Caco-2 (cell line): ENCODE measurements at regions of chr5 and their contacts with region 1.

Region 1: DNA sequence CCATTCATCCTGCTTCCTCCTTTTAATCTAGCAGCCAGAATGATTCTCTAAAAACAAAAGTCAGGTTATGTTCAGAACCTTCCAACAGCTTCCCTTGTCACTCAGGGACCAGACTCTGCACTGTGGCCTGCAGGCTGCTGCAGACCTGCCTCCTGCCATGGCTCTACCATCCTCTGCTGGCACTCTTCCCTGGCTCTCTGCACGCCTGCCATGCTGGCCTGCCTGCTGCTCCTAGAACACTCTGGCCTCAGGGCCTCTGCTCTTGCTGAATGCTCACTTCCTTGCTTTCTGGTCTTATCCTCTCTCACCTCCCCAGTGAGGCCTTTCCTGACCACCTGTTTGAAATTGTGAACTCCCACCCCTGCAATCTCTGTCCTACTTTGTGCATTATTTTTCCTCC is 149.4 kb downstream of the CD180 start:
- DNase-seq: no peak
- H3K4me3 ChIP-seq: no peak overlapping the region
- H3K4me3 Mint-ChIP-seq: peak overlapping the region; percentile 59
- H3K27ac Mint-ChIP-seq: peak overlapping the region; percentile 61
- H3K4me1 ChIP-seq: peaks cover 93% of the 10 kb centered on the region
- H3K4me1 Mint-ChIP-seq: peaks cover 71% of the 10 kb centered on the region
- H3K27me3 ChIP-seq: no peaks in the 10 kb centered on the region
- H3K27me3 Mint-ChIP-seq: no peaks in the 10 kb centered on the region
- CTCF ChIP-seq: no peak

Region 2: DNA sequence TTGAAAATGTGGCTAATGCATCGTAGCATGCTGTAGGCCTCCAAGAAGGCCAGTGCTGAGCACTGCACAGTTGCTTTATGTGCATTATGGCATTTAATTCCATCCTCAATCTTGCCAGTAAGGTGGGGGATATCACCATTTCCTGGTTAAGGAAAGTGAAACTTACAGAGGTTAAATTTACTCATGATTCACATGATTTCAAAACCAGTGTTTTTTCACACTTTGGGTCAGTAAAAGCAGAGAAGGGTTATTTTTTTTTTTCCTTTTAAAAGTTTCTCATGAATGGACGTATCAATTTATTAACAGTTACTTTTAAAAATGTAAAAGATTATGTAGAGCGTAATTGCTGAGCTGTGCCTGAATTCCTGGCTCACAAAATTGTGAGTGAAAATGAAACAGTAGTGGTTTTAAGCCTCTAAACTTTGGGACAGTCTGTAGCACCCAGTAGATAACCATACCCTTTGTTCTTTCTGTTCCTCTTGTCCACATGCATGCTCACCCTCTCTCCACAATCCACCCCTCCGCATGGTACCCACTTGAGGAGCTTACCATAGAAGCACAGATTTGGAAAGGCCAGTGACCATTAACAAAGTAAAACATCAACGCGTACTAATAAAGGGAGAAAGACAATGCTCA is 429.8 kb before region 1 on chr5:
- CTCF ChIA-PET with region 1: no interaction called
- POLR2A ChIA-PET with region 1: no interaction called
- intact Hi-C with region 1: no loop called
- DNase-seq: no peak
- H3K4me3 ChIP-seq: no peak overlapping the region
- H3K4me3 Mint-ChIP-seq: no peak overlapping the region
- H3K27ac Mint-ChIP-seq: no peak overlapping the region
- H3K4me1 ChIP-seq: no peaks in the 10 kb centered on the region
- H3K4me1 Mint-ChIP-seq: no peaks in the 10 kb centered on the region
- H3K27me3 ChIP-seq: no peaks in the 10 kb centered on the region
- H3K27me3 Mint-ChIP-seq: peaks cover 11% of the 10 kb centered on the region
- CTCF ChIP-seq: no peak

Region 3: DNA sequence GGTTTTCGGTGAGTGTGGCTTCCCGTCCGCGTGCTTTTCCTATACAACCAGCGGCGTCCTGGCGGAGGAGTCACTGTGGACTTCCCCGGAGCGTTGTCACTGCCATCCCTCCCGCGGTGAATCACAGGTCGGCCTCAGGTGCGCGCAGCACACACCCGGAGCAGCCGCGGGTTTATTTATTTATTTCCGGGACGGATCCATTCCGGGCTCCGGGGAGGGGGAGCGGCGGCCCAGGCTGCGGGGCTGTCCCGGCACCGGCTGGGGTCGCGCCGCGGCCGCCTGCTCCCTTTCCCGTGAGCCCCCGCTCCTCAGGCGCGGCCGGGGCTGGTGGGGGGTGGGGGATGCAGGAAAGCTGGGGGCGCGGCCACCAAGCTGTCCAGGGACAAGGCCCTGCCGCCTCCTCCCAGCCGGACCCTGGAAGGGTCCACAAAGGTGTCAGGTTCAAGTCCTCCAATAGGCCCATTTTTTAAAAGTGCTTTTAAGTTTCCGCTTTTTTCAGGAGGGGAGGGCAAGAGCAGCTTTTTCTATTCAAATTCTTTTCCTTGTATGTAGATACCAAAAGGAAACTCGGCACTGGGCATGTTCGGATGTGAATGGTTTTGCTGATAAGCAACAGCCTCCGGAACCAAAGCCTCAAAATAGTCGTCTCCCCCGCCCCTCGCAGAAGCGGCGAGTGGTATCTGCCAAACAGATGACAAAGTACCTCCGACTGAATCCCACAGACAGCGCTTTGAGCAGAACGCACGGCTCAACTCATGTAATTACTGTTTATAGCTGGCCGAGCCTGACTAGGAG is 43.0 kb before region 1 on chr5:
- CTCF ChIA-PET with region 1: no interaction called
- POLR2A ChIA-PET with region 1: interaction called, 5 read pairs
- intact Hi-C with region 1: loop called (anchors 2 kb)
- DNase-seq: peak; percentile 93 to 96
- H3K4me3 ChIP-seq: peak overlapping the region; percentile 51
- H3K4me3 Mint-ChIP-seq: peak overlapping the region; percentile 97
- H3K27ac Mint-ChIP-seq: peak overlapping the region; percentile 95
- H3K4me1 ChIP-seq: peaks cover 45% of the 10 kb centered on the region
- H3K4me1 Mint-ChIP-seq: peaks cover 41% of the 10 kb centered on the region
- H3K27me3 ChIP-seq: no peaks in the 10 kb centered on the region
- H3K27me3 Mint-ChIP-seq: no peaks in the 10 kb centered on the region
- CTCF ChIP-seq: no peak

Region 4: GRCh38 chr5:67015541-67016191 is 31.5 kb before region 1 on chr5:
- CTCF ChIA-PET with region 1: interaction called, 4 read pairs
- POLR2A ChIA-PET with region 1: interaction called, 5 read pairs
- intact Hi-C with region 1: loop called (anchors 2 kb)
- DNase-seq: peak in 1 of 2 experiments; percentile 56
- H3K4me3 ChIP-seq: peak overlapping the region; percentile 8; the same call in 1 of the 2 replicates
- H3K4me3 Mint-ChIP-seq: peak overlapping the region; percentile 57
- H3K27ac Mint-ChIP-seq: peak overlapping the region; percentile 84
- H3K4me1 ChIP-seq: peaks cover 78% of the 10 kb centered on the region
- H3K4me1 Mint-ChIP-seq: peaks cover 57% of the 10 kb centered on the region
- H3K27me3 ChIP-seq: no peaks in the 10 kb centered on the region
- H3K27me3 Mint-ChIP-seq: no peaks in the 10 kb centered on the region
- CTCF ChIP-seq: no peak

Region 5: GRCh38 chr5:67033880-67034651 is 13.1 kb before region 1 on chr5:
- CTCF ChIA-PET with region 1: no interaction called
- POLR2A ChIA-PET with region 1: interaction called, 3 read pairs
- intact Hi-C with region 1: loop called (anchors 1 kb)
- DNase-seq: peak; percentile 64 to 65
- H3K4me3 ChIP-seq: no peak overlapping the region
- H3K4me3 Mint-ChIP-seq: peak overlapping the region; percentile 27
- H3K27ac Mint-ChIP-seq: peak overlapping the region; percentile 86
- H3K4me1 ChIP-seq: peaks cover 65% of the 10 kb centered on the region
- H3K4me1 Mint-ChIP-seq: peaks cover 43% of the 10 kb centered on the region
- H3K27me3 ChIP-seq: no peaks in the 10 kb centered on the region
- H3K27me3 Mint-ChIP-seq: no peaks in the 10 kb centered on the region
- CTCF ChIP-seq: no peak

Region 6: GRCh38 chr5:67059744-67060490 is 12.8 kb after region 1 on chr5:
- CTCF ChIA-PET with region 1: no interaction called
- POLR2A ChIA-PET with region 1: no interaction called
- intact Hi-C with region 1: loop called (anchors 1 kb)
- DNase-seq: no peak
- H3K4me3 ChIP-seq: no peak overlapping the region
- H3K4me3 Mint-ChIP-seq: no peak overlapping the region
- H3K27ac Mint-ChIP-seq: peak overlapping the region; percentile 5
- H3K4me1 ChIP-seq: peaks cover 33% of the 10 kb centered on the region
- H3K4me1 Mint-ChIP-seq: peaks cover 38% of the 10 kb centered on the region
- H3K27me3 ChIP-seq: no peaks in the 10 kb centered on the region
- H3K27me3 Mint-ChIP-seq: no peaks in the 10 kb centered on the region
- CTCF ChIP-seq: no peak

Region 7: GRCh38 chr5:67142816-67143215 is 95.7 kb after region 1 on chr5:
- CTCF ChIA-PET with region 1: no interaction called
- POLR2A ChIA-PET with region 1: no interaction called
- intact Hi-C with region 1: loop called (anchors 5 kb)
- DNase-seq: no peak
- H3K4me3 ChIP-seq: no peak overlapping the region
- H3K4me3 Mint-ChIP-seq: no peak overlapping the region
- H3K27ac Mint-ChIP-seq: no peak overlapping the region
- H3K4me1 ChIP-seq: peaks cover 18% of the 10 kb centered on the region
- H3K4me1 Mint-ChIP-seq: peaks cover 14% of the 10 kb centered on the region
- H3K27me3 ChIP-seq: no peaks in the 10 kb centered on the region
- H3K27me3 Mint-ChIP-seq: no peaks in the 10 kb centered on the region
- CTCF ChIP-seq: no peak